Mammary epithelial cell (primary cell): ENCODE measurements at regions of chr11 and their contacts with region 1.

Region 1: DNA sequence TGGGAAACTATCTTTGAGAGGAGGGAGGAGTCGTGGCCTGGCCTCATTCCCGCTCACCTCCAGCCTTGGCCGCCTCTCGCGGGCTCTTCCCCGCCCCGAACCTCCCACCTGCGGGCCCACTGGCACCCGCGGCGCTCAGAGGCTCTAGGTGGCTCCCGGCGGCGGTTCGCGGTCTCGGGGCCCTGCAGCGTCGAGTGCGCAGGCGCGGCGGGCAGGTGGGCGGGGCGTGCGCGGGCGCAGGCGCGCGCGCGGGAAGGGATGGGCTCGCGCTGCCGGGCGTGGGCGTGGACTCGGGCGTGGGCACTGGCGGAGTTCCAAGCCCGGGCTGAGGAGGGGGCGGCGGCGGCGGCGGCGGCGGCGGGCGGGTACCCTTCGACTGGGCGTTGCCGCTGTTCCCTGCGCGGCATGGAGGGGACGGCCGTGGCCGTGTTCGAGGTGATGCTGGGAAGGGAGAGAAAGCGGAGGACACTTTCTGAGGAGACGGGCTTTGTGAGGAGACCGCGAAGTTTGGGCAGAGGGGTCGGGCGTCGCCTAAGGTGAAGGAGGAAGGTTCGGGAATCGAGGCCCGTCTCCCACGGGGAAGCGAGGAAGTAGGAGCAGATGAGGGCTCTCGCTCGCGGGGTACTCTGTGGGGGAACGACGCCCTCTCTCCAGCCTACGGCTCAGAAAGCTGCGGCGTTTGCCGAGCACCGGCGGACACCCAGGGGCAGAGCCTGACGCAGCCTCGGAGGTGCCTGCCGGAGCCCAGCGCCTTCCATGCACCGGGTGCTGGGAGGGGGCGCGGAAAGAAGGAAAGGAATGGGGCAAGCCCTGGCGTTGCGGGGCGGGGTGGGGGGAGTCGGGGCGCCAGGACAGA is 15.7 kb upstream of the SPTBN2 start:
- DNase-seq: peak; percentile 82
- H3K4me3 ChIP-seq: peak overlapping the region; percentile 66 to 97 (median 84)
- H3K27ac ChIP-seq: peak overlapping the region; percentile 92
- H3K4me1 ChIP-seq: peaks cover 28% of the 10 kb centered on the region
- H3K27me3 ChIP-seq: no peaks in the 10 kb centered on the region
- CTCF ChIP-seq: no peak

Region 2: DNA sequence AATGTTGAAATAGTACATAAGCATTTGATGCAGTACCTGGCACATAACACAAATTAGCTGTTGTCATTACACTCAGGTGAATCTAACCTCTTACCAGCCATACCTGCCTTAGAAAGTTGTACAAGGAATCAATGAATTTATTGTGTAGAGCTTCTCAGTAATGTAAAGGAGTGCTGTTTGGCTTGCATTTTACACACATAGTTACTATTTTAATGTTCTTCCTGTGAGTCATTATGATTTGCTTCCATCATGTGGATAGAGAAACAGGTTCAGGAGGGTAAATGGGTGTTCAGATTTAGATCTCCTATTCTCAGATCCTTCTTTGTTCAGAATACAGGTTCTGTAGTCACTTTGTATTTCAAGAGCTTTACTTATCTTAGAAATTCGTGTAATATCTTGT is 70.9 kb after region 1 on chr11:
- CTCF ChIA-PET with region 1: no interaction called
- dilution Hi-C with region 1: no loop called
- in situ Hi-C with region 1: no loop called
- intact Hi-C with region 1: loop called (anchors 2 kb)
- DNase-seq: peak; percentile 75
- H3K4me3 ChIP-seq: no peak overlapping the region
- H3K27ac ChIP-seq: peak overlapping the region; percentile 61
- H3K4me1 ChIP-seq: peaks cover 21% of the 10 kb centered on the region
- H3K27me3 ChIP-seq: no peaks in the 10 kb centered on the region
- CTCF ChIP-seq: no peak